Posterior cingulate gyrus (tissue), 11 donors: ENCODE measurements at regions of chr11 and their contacts with region 1.

Region 1: GRCh38 chr11:47967577-47968425 is 12.6 kb upstream of the PTPRJ start:
- DNase-seq: peak in 2 of 10 donors; percentile 3 to 11

Region 2: GRCh38 chr11:47899801-47900200 is 68.0 kb before region 1 on chr11:
- intact Hi-C with region 1: loop called (anchors 10 kb)
- DNase-seq: no peak